HEK293 (cell line): ENCODE measurements at regions of chr6 and their contacts with region 1.

Region 1: DNA sequence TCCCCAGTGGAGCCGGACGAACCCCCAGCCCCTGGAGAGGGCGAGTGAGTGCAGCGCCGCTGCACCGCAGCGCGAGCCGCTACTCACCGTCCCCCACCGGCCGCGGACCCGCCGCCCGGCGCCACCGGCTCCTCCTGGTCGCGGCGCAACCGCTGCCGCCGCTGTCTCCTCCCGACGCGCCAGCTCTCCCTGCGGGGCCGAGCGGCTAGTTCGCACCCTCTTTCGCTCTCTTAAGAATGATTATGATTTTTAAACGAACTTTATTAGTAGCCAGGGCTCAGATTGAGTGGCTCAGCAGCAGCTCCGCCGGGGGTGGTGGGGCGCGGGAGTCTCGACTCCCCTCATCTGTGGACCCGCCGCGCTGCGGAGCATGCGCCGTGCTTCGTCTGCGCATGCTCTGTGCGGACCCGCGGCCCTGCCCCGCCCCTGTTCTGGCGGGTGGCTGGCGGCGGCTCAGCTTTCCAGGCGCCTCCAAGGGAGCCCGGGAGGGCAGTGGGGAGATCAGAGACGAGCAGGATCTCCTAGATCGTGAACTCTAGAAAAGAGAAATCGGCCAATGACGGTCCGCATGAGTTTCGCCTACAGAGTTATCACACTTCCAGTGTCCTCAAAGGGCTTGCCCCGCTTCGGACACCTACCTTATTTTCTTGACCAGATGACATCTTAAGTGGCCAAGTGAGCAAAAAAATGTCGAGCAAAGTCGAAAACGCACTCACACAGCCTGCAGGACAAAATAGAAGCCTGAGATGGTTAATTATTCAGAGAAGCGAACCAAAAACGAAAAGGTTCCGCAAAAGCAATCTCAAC is at the start of gene RAB23:
- H3K4me3 ChIP-seq: peak within 1 kb of the TSS; percentile 83
- H3K27ac ChIP-seq: peak within 1 kb of the TSS; percentile 91
- H3K4me1 ChIP-seq: peaks cover 15% of the 10 kb centered on the region
- CTCF ChIP-seq: 0 out of 2 replicates have a peak, but pooled peaks have one; percentile 18

Region 2: DNA sequence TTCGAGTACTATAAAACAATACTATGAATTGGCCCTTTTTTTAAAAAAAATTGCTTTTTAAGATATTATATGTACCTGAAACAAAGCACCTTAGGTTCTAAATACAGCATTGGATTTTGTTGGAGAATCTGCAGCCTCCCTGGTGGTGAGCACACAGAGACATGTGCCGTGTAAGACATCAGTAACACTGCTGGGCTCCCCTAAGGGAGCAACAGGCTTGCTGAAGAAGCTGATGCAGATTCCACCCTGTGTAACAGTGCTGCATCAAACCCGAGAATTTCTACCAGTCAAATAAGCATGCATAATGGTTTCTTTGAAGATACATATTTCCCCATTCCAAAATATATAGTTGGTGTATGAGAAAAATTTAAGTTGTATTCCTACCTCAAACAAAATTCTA is 158.3 kb before region 1 on chr6:
- CTCF ChIA-PET with region 1: no interaction called
- POLR2A ChIA-PET with region 1: no interaction called
- H3K4me3 ChIP-seq: no peak overlapping the region
- H3K27ac ChIP-seq: no peak overlapping the region
- H3K4me1 ChIP-seq: no peaks in the 10 kb centered on the region
- CTCF ChIP-seq: no peak

Region 3: DNA sequence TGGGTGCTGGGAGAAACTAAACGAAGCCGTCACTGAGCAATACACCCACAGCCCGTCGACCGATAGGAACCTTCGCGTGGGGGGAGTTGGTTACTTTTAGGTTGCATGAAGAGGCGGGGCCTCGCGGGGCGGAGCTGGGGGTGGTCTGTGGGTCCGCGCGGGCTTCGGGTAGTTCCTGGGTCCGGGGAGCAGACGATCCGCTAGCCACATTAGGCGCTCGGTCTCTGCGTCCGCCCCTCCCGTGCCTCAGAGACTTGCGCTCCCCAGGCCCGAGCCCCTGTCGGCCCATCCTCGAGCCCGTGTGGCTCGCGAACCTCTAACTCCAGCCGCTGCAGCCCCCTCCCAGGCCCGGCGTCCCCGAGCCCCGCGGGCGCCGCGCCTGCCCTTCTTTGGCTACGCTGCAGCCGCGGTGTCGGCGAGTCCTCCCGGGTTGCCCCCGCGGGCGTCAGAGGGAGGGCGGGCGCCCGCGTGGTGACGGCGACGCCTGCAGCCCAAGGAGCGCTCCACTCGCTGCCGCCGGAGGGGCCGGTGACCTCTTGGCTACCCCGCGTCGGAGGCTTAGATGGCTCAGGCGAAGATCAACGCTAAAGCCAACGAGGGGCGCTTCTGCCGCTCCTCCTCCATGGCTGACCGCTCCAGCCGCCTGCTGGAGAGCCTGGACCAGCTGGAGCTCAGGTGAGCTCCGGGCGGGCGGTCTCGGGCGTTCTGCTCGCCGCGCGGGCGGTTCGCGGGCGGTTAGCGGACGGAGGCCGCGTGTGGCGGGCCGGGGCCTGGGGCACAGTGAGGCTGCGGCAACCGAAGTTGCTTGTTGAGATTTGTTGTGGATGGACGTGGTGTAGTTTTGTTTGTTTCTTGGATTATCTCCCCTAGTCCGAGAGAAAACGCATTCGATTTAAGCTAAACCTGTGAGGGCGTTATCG is 49.7 kb before region 1 on chr6 and contains the start of gene BAG2:
- CTCF ChIA-PET with region 1: interaction called, 4 read pairs
- POLR2A ChIA-PET with region 1: interaction called, 15 read pairs
- H3K4me3 ChIP-seq: peak within 1 kb of the TSS; percentile 65
- H3K27ac ChIP-seq: peak within 1 kb of the TSS; percentile 92
- H3K4me1 ChIP-seq: peaks cover 14% of the 10 kb centered on the region; the same call in 1 of the 2 replicates
- CTCF ChIP-seq: peak; percentile 82